CD4-positive, alpha-beta memory T cell (primary cell): ENCODE measurements at regions of chr5 and their contacts with region 1.

Region 1: GRCh38 chr5:159156426-159157238 is 52.7 kb downstream of the RNF145 start:
- DNase-seq: peak; percentile 57 to 73 (median 70)
- H3K4me3 ChIP-seq: no peak overlapping the region
- H3K4me3 Mint-ChIP-seq: peak overlapping the region in 3 of 8 donors; percentile 2 to 38 (median 34)
- H3K27ac ChIP-seq: no peak overlapping the region
- H3K27ac Mint-ChIP-seq: peak overlapping the region; percentile 64 to 91 (median 84)
- H3K4me1 ChIP-seq: peaks cover 14% of the 10 kb centered on the region
- H3K4me1 Mint-ChIP-seq: peaks cover 9 to 22% (median 14%) of the 10 kb centered on the region in 4 donors
- H3K27me3 ChIP-seq: no peaks in the 10 kb centered on the region
- H3K27me3 Mint-ChIP-seq: no peaks in the 10 kb centered on the region

Region 2: GRCh38 chr5:159171274-159171673 is 14.6 kb after region 1 on chr5:
- CTCF ChIA-PET with region 1: interaction called, 13 read pairs
- POLR2A ChIA-PET with region 1: interaction called, 3 read pairs
- intact Hi-C with region 1: no loop called
- DNase-seq: no peak
- H3K4me3 ChIP-seq: no peak overlapping the region
- H3K4me3 Mint-ChIP-seq: no peak overlapping the region
- H3K27ac ChIP-seq: no peak overlapping the region
- H3K27ac Mint-ChIP-seq: no peak overlapping the region
- H3K4me1 ChIP-seq: peaks cover 20% of the 10 kb centered on the region
- H3K4me1 Mint-ChIP-seq: peaks cover 22 to 41% (median 27%) of the 10 kb centered on the region in 4 donors
- H3K27me3 ChIP-seq: no peaks in the 10 kb centered on the region
- H3K27me3 Mint-ChIP-seq: no peaks in the 10 kb centered on the region

Region 3: DNA sequence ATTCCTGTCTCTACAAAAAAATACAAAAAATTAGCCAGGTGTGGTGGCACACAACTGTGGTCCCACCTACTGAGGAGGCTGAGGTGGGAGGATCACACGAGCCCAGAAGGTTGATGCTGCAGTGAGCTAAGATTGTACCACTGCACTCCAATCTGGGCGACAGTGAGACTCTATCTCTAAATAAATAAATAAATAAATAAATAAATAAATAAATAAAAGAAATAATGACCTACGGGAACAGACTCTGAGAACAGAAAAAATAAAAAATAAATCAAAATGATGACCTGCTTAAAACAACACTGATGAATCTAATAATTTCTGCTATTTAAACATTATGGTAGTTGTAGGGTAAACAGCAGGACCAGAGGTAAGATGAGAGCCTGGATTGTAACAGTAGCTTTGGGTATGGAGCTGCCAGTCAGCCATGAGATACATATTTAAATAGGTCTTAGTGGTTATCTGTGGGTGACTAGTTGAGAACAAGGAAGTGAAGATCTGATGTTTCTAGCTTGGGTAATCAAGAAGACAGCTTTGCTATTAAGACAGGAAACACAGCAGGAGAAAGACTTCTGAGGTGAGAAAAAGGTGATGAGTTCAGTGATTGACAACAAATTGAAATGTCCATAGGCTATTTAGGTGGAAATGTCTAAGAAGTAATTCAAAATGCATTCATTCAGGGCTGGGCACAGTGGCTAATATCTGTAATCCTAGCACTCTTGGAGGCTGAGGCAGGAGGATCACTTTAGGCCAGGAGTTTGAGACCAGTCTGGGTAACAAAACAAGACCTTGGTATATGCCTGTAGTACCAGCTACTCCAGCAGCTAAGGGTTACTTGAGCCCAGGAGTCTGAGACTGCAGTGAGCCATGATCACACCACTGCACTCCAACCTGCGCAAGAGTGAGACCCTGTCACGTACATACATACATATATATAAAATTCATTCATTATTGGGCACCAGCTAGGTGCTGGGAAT is 41.7 kb after region 1 on chr5:
- CTCF ChIA-PET with region 1: interaction called, 10 read pairs
- POLR2A ChIA-PET with region 1: interaction called, 8 read pairs
- intact Hi-C with region 1: no loop called
- DNase-seq: peak in 4 of 5 donors; percentile 23 to 33 (median 32)
- H3K4me3 ChIP-seq: no peak overlapping the region
- H3K4me3 Mint-ChIP-seq: peak overlapping the region in 7 of 8 donors; percentile 1 to 56 (median 32)
- H3K27ac ChIP-seq: no peak overlapping the region
- H3K27ac Mint-ChIP-seq: peak overlapping the region; percentile 17 to 84 (median 63)
- H3K4me1 ChIP-seq: peaks cover 49% of the 10 kb centered on the region
- H3K4me1 Mint-ChIP-seq: peaks cover 49 to 83% (median 68%) of the 10 kb centered on the region in 4 donors
- H3K27me3 ChIP-seq: no peaks in the 10 kb centered on the region
- H3K27me3 Mint-ChIP-seq: no peaks in the 10 kb centered on the region

Region 4: DNA sequence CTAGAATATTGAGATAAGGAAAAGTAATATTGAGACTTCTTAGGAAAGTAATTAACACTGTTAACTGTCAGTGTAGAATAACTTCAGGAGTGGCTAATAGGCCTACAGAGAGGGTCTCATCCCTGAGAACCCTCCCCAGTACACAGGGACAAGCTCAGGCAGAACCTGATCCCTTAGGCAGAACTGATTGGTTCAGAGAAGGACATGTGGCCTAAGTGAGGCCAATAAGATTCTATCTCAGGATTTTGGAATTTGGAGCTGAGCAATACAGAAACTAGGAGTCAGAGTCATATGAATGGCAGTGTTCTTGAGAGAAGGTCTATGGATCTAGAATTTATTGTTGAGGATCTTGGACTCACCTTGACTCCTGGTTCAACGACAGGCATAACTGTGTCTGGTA is 95.6 kb after region 1 on chr5:
- CTCF ChIA-PET with region 1: interaction called, 11 read pairs
- POLR2A ChIA-PET with region 1: no interaction called
- intact Hi-C with region 1: no loop called
- DNase-seq: no peak
- H3K4me3 ChIP-seq: no peak overlapping the region
- H3K4me3 Mint-ChIP-seq: no peak overlapping the region
- H3K27ac ChIP-seq: no peak overlapping the region
- H3K27ac Mint-ChIP-seq: no peak overlapping the region
- H3K4me1 ChIP-seq: no peaks in the 10 kb centered on the region
- H3K4me1 Mint-ChIP-seq: no peaks in the 10 kb centered on the region
- H3K27me3 ChIP-seq: no peaks in the 10 kb centered on the region
- H3K27me3 Mint-ChIP-seq: peaks cover 4 to 11% of the 10 kb centered on the region in 2 donors

Region 5: GRCh38 chr5:159286420-159287035 is 129.9 kb after region 1 on chr5:
- CTCF ChIA-PET with region 1: interaction called, 19 read pairs
- POLR2A ChIA-PET with region 1: no interaction called
- intact Hi-C with region 1: no loop called
- DNase-seq: peak in 4 of 5 donors; percentile 29 to 40 (median 33)
- H3K4me3 ChIP-seq: no peak overlapping the region
- H3K4me3 Mint-ChIP-seq: no peak overlapping the region
- H3K27ac ChIP-seq: no peak overlapping the region
- H3K27ac Mint-ChIP-seq: no peak overlapping the region
- H3K4me1 ChIP-seq: no peaks in the 10 kb centered on the region
- H3K4me1 Mint-ChIP-seq: no peaks in the 10 kb centered on the region
- H3K27me3 ChIP-seq: no peaks in the 10 kb centered on the region
- H3K27me3 Mint-ChIP-seq: no peaks in the 10 kb centered on the region

Region 6: DNA sequence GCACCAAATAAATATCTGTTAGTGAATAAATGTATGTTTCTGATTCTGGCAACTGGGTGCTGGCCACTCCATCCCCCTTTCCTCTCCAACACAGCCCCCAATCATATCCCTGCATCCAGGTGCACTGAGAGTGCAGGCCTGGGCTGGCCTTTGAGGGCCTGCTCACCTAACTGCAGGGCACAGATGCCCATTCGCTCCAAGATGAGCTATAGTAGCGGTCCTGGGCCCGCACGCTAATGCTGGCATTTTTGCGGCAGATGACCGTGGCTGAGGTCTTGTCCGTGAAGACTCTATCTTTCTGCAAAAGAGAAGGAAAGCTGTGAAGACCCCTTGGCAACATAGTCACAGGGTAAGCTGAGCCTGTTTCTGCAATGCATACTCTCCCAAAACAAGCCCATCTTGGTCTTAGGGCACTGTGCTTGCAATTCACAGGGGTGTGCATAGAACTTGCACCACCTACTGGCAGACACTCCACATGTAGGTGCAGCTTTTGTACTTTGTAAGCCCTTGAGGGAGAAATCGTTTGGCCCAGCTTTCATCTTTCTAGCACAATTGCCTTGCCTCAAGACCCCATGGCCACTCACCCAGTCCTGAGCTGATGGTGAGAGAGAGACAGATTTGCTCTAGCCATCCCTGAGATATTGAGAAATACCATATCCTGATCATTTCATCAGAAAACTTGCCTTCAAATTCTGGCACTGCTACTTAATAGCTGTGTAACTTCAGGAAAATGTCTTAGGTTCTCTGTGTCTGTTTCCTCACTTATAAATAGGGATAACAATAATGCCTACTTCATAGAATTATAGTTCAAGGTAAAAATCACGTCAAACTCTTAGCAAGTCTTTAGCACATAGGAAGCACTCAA is 160.1 kb after region 1 on chr5:
- CTCF ChIA-PET with region 1: interaction called, 175 read pairs
- POLR2A ChIA-PET with region 1: interaction called, 4 read pairs
- intact Hi-C with region 1: loop called (anchors 1 kb)
- DNase-seq: peak in 4 of 5 donors; percentile 22 to 33 (median 29)
- H3K4me3 ChIP-seq: no peak overlapping the region
- H3K4me3 Mint-ChIP-seq: no peak overlapping the region
- H3K27ac ChIP-seq: no peak overlapping the region
- H3K27ac Mint-ChIP-seq: peak overlapping the region in 1 of 7 donors; percentile 81
- H3K4me1 ChIP-seq: no peaks in the 10 kb centered on the region
- H3K4me1 Mint-ChIP-seq: no peaks in the 10 kb centered on the region
- H3K27me3 ChIP-seq: no peaks in the 10 kb centered on the region
- H3K27me3 Mint-ChIP-seq: peaks cover 1 to 9% of the 10 kb centered on the region in 2 donors

Region 7: GRCh38 chr5:159915904-159916840 is 759.5 kb after region 1 on chr5 and contains the start of gene ADRA1B:
- CTCF ChIA-PET with region 1: interaction called, 7 read pairs
- POLR2A ChIA-PET with region 1: no interaction called
- intact Hi-C with region 1: loop called (anchors 1 kb)
- DNase-seq: peak in 4 of 5 donors; percentile 17 to 32 (median 26)
- H3K4me3 ChIP-seq: no peak within 1 kb of the TSS
- H3K4me3 Mint-ChIP-seq: peak within 1 kb of the TSS; percentile 7 to 82 (median 68)
- H3K27ac ChIP-seq: no peak within 1 kb of the TSS
- H3K27ac Mint-ChIP-seq: peak within 1 kb of the TSS in 2 of 7 donors; percentile 53 to 63
- H3K4me1 ChIP-seq: peaks cover 5% of the 10 kb centered on the region
- H3K4me1 Mint-ChIP-seq: peaks cover 7 to 16% (median 11%) of the 10 kb centered on the region in 4 donors
- H3K27me3 ChIP-seq: peaks cover 17% of the 10 kb centered on the region
- H3K27me3 Mint-ChIP-seq: peaks cover 42 to 64% of the 10 kb centered on the region in 2 donors
- total RNA-seq, gene ADRA1B: not detected